BJ (cell line): ENCODE measurements at regions of chr16 and their contacts with region 1.

Region 1: GRCh38 chr16:214812-215211 is 14.4 kb downstream of the LUC7L start:
- DNase-seq: no peak
- H3K4me3 ChIP-seq: no peak overlapping the region
- H3K27me3 ChIP-seq: no peaks in the 10 kb centered on the region
- CTCF ChIP-seq: no peak

Region 2: DNA sequence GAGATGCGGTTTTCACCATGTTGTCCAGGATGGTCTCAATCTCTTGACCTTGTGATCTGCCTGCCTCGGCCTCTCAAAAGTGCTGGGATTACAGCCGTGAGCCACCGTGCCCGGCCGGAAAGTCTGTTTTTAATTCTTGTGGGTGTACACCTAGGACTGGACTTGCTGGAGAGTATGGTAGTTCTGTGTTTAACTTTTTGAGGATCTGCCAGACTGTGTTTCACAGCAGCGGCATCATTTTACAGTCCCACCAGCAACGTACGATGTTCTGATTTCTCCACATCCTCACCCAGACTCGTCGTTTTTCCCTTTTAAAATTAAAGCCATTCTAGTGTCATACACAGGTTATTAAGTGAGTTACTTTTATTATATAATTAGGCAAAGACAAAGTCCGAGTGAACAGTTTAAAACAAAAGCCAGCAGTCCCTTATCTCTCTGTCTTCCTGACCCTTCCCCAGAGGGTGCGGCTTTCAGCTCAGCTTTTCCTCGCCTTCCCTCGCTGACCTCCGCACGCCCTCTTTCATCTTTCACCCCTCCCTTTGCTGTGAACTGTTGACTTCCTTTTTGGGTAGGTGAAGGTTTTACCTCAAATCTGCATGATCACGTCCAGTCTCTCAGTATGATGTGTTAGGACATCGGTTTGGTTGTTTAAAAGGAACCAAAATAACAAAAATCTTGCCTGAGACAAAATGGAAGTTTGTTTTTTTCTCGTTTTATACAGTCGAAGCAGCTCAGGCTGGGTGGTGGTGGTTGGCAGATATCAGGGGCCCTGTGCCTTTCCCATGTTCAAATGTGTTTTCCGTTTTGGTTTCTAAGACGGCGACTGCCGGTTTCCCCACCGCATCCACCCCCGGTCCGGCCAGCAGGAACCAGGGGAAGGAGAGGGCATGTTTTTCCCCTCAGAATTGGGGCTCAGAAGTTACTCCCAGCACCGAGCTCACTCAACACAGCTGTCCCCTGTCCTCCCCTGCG is 37.8 kb after region 1 on chr16:
- CTCF ChIA-PET with region 1: no interaction called
- POLR2A ChIA-PET with region 1: interaction called, 30 read pairs
- DNase-seq: no peak
- H3K4me3 ChIP-seq: no peak overlapping the region
- H3K27me3 ChIP-seq: no peaks in the 10 kb centered on the region
- CTCF ChIP-seq: no peak